ENCODE measurements at regions of chr18 and their contacts with region 1.

Region 1: GRCh38 chr18:74495581-74496507 is at the start of gene CNDP2:
- DNase-seq: peak; percentile 99 to 100 (median 100)
- H3K4me3 ChIP-seq: peak within 1 kb of the TSS; percentile 56 to 93 (median 82)
- H3K27ac ChIP-seq: peak within 1 kb of the TSS; percentile 49 to 95 (median 86)
- H3K4me1 ChIP-seq: peaks cover 7 to 9% of the 10 kb centered on the region in 2 donors
- H3K27me3 ChIP-seq: no peaks in the 10 kb centered on the region
- CTCF ChIP-seq: no peak
- POLR2A ChIP-seq: peak; percentile 60 to 73
- total RNA-seq, gene CNDP2: 64.8 to 159 (median 104) TPM

Region 2: DNA sequence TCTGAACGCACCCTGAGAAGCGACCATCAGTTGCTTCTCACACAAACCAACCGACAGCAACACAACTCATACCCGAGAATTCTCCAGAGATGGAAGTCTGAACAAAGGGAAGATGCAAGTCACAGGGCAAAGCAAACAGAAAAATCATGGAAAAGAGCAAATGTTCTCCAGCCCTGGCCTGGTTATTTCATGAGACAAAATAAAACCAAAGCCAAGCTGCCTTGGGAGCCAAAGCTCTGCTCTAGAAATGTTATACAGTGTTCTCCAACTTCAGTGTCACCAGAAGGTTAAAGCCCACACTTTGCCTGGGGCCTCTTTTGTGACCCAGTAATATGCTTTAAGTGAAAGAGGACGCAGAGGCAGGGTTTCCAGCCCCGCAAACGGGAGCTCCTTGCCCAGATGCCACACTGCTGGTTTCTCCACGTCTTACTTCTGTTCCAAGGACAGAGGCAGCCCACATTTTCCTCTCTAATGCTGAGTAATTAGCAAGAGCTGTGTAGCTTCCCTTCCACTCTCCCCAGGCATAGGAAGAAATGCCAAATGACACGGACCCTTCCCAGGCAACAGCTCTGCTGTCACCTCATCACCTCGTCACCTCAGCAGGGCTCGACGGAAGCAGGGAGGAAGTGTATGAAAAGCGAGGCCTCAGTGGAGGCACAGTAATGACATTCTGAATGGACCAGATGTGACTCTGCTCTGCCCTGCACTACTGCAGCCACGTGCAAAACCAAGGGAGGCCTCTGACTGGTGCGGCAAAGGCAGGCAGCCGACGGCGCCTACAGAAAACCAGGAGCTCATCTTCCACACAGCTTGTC is 412.9 kb before region 1 on chr18:
- intact Hi-C with region 1: no loop called
- DNase-seq: no peak
- H3K4me3 ChIP-seq: no peak overlapping the region
- H3K27ac ChIP-seq: no peak overlapping the region
- H3K4me1 ChIP-seq: no peaks in the 10 kb centered on the region
- H3K27me3 ChIP-seq: no peaks in the 10 kb centered on the region
- CTCF ChIP-seq: no peak
- POLR2A ChIP-seq: no peak

Region 3: GRCh38 chr18:74597662-74598349 is 102.0 kb after region 1 on chr18 and contains the start of gene ZNF407:
- intact Hi-C with region 1: loop called in 1 of 2 experiments (anchors 10 kb)
- DNase-seq: peak; percentile 87 to 93 (median 90)
- H3K4me3 ChIP-seq: peak within 1 kb of the TSS; percentile 83 to 96 (median 94)
- H3K27ac ChIP-seq: peak within 1 kb of the TSS; percentile 92 to 100 (median 98)
- H3K4me1 ChIP-seq: peaks cover 16 to 30% of the 10 kb centered on the region in 2 donors
- H3K27me3 ChIP-seq: no peaks in the 10 kb centered on the region
- CTCF ChIP-seq: no peak
- POLR2A ChIP-seq: peak; percentile 73 to 78
- total RNA-seq, gene ZNF407: 6.9 to 20.2 (median 10.3) TPM

Measured in adrenal gland (tissue), 19 donors.